Naive thymus-derived CD4-positive, alpha-beta T cell (primary cell): ENCODE measurements at regions of chr1 and their contacts with region 1.

Region 1: DNA sequence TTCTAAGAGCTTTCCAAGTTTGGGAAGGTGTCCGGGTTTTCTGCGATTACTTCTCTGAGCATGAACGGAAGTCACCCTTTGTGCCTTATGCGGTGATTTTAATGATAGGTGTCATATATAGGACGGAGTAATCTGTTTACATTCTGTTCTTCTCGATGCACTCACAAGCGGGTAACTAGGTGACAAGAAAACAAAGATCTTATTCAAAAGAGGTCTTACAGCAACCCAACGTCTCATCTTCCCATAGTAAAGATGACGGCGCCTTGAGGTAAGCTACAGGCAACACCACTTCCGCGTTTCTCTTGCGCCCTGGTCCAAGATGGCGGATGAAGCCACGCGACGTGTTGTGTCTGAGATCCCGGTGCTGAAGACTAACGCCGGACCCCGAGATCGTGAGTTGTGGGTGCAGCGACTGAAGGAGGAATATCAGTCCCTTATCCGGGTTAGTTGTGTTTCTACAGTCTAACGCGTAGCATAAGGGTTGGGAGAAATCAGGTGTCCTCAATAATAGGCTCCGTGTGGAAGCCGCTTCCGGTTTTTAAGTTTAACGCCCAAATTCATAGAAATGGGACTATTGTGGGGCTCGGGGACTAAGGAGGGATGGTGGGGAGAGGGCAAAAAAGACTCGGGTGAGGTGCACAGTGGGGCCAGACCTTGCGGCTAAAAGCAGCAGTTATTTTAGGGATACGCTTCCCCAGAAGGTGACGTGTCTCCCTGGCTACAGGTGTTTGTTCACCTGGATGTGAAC is at the start of gene UFC1:
- DNase-seq: peak; percentile 72 to 92 (median 87)
- ATAC-seq: peak; percentile 94
- H3K4me3 ChIP-seq: peak within 1 kb of the TSS; percentile 86
- H3K4me3 Mint-ChIP-seq: peak within 1 kb of the TSS; percentile 93 to 100 (median 100)
- H3K27ac ChIP-seq: peak within 1 kb of the TSS; percentile 88
- H3K27ac Mint-ChIP-seq: peak within 1 kb of the TSS; percentile 100
- H3K4me1 ChIP-seq: peaks cover 13 to 20% of the 10 kb centered on the region in 2 donors
- H3K4me1 Mint-ChIP-seq: peaks cover 7 to 39% (median 35%) of the 10 kb centered on the region in 7 donors
- H3K27me3 ChIP-seq: no peaks in the 10 kb centered on the region
- H3K27me3 Mint-ChIP-seq: no peaks in the 10 kb centered on the region
- total RNA-seq, gene UFC1: 83.7 to 116 (median 98.9) TPM

Region 2: GRCh38 chr1:161013488-161014230 is 140.2 kb before region 1 on chr1:
- CTCF ChIA-PET with region 1: no interaction called
- POLR2A ChIA-PET with region 1: no interaction called
- intact Hi-C with region 1: no loop called
- DNase-seq: peak; percentile 23 to 63 (median 57)
- ATAC-seq: peak; percentile 88
- H3K4me3 ChIP-seq: peak overlapping the region; percentile 57
- H3K4me3 Mint-ChIP-seq: peak overlapping the region; percentile 74 to 97 (median 84)
- H3K27ac ChIP-seq: peak overlapping the region; percentile 73
- H3K27ac Mint-ChIP-seq: peak overlapping the region; percentile 91 to 98 (median 96)
- H3K4me1 ChIP-seq: peaks cover 10 to 29% of the 10 kb centered on the region in 2 donors
- H3K4me1 Mint-ChIP-seq: peaks cover 23 to 49% (median 40%) of the 10 kb centered on the region in 7 donors
- H3K27me3 ChIP-seq: no peaks in the 10 kb centered on the region
- H3K27me3 Mint-ChIP-seq: no peaks in the 10 kb centered on the region

Region 3: DNA sequence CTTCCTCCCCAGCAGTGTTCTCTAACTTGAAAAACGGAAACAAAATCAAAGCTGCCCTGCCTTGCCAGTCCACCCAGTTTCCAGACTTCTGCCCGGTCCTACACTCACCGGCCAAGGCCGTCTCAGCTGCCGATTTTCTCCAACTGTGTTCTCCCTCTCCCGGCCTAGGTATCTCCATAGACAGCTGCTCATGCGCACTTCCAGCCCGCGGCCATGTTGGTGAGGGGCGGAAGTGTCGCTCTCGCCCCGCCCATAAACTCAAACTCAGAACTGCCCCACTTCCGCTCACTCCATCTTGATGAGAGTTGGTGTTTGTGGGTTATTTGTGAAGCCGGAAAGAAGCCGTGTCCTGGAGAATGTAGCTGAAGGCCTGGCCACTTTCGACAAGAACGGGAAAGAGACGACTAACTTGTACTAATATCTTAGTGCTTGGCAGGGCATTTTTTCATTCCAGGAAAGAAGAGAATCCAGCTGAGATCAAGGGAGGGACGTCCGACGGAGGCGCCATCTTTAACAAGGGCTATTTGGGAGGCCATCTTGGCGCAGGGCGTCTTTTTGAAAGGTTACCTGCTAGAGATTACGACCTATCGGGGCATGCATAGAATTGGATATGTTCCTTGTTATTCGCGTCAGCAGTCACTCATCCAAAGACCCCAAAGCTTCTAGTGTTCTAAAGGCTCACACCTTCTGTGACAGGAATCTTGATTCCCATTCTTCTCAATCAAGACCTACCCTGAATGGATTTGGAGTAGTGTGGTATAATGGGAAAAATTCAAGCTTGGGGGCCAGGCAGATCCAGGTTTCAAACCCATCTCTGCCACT is 107.9 kb before region 1 on chr1 and contains the start of gene USF1:
- CTCF ChIA-PET with region 1: interaction called, 5 read pairs
- POLR2A ChIA-PET with region 1: interaction called, 9 read pairs
- intact Hi-C with region 1: loop called (anchors 1 to 2 kb)
- DNase-seq: peak; percentile 84 to 96 (median 93)
- ATAC-seq: peak; percentile 89
- H3K4me3 ChIP-seq: peak within 1 kb of the TSS; percentile 93
- H3K4me3 Mint-ChIP-seq: peak within 1 kb of the TSS; percentile 93 to 100 (median 97)
- H3K27ac ChIP-seq: peak within 1 kb of the TSS; percentile 92
- H3K27ac Mint-ChIP-seq: peak within 1 kb of the TSS; percentile 92 to 100 (median 99)
- H3K4me1 ChIP-seq: peaks cover 17 to 23% of the 10 kb centered on the region in 2 donors
- H3K4me1 Mint-ChIP-seq: peaks cover 41 to 54% (median 49%) of the 10 kb centered on the region in 7 donors
- H3K27me3 ChIP-seq: no peaks in the 10 kb centered on the region
- H3K27me3 Mint-ChIP-seq: no peaks in the 10 kb centered on the region
- total RNA-seq, gene USF1: 71.6 to 115 (median 91.7) TPM

Region 4: GRCh38 chr1:161098210-161099068 is 55.4 kb before region 1 on chr1 and contains the start of gene KLHDC9:
- CTCF ChIA-PET with region 1: no interaction called
- POLR2A ChIA-PET with region 1: interaction called, 10 read pairs
- intact Hi-C with region 1: no loop called
- DNase-seq: peak; percentile 29 to 68 (median 42)
- ATAC-seq: peak; percentile 57
- H3K4me3 ChIP-seq: peak within 1 kb of the TSS; percentile 81
- H3K4me3 Mint-ChIP-seq: peak within 1 kb of the TSS; percentile 81 to 94 (median 90)
- H3K27ac ChIP-seq: peak within 1 kb of the TSS; percentile 47
- H3K27ac Mint-ChIP-seq: peak within 1 kb of the TSS; percentile 87 to 100 (median 96)
- H3K4me1 ChIP-seq: peaks cover 9 to 11% of the 10 kb centered on the region in 2 donors
- H3K4me1 Mint-ChIP-seq: peaks cover 18 to 40% (median 23%) of the 10 kb centered on the region in 7 donors
- H3K27me3 ChIP-seq: no peaks in the 10 kb centered on the region
- H3K27me3 Mint-ChIP-seq: peaks cover 0 to 12% (median 0%) of the 10 kb centered on the region in 5 donors
- total RNA-seq, gene KLHDC9: 0.40 to 1.1 TPM in 2 of 5 experiments, not detected in the others

Region 5: DNA sequence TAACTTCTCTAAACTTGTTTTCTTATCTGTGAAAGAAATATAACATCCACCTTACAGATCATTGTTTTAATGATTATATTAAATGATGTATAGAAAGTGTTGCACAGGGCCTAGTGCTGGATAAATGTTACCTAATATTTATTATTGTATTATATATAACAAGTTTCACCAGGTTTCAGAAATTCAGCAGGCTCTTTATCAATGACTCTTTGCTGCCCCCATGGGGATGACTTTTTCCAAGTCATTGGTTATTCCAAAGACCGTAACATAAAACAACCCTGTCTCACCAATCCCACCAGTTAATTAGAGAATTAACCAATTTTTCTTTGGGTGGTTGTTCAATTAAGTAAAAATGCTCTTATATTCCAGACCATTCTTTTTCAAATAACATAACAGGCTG is 14.1 kb before region 1 on chr1:
- CTCF ChIA-PET with region 1: interaction called, 4 read pairs
- POLR2A ChIA-PET with region 1: interaction called, 18 read pairs
- intact Hi-C with region 1: no loop called
- DNase-seq: peak in 5 of 9 donors; percentile 40 to 58 (median 50)
- ATAC-seq: peak; percentile 73
- H3K4me3 ChIP-seq: no peak overlapping the region
- H3K4me3 Mint-ChIP-seq: no peak overlapping the region
- H3K27ac ChIP-seq: no peak overlapping the region
- H3K27ac Mint-ChIP-seq: peak overlapping the region in 1 of 9 donors; percentile 54
- H3K4me1 ChIP-seq: no peaks in the 10 kb centered on the region
- H3K4me1 Mint-ChIP-seq: peaks cover 4 to 17% (median 10%) of the 10 kb centered on the region in 7 donors
- H3K27me3 ChIP-seq: no peaks in the 10 kb centered on the region
- H3K27me3 Mint-ChIP-seq: no peaks in the 10 kb centered on the region

Region 6: GRCh38 chr1:161185282-161185682 is 31.4 kb after region 1 on chr1:
- CTCF ChIA-PET with region 1: interaction called, 3 read pairs
- POLR2A ChIA-PET with region 1: interaction called, 13 read pairs
- intact Hi-C with region 1: loop called in 1 of 2 experiments (anchors 1 kb)
- DNase-seq: peak; percentile 38 to 92 (median 87)
- ATAC-seq: peak; percentile 88
- H3K4me3 ChIP-seq: peak overlapping the region; percentile 24
- H3K4me3 Mint-ChIP-seq: peak overlapping the region; percentile 76 to 89 (median 84)
- H3K27ac ChIP-seq: peak overlapping the region; percentile 65
- H3K27ac Mint-ChIP-seq: peak overlapping the region; percentile 92 to 99 (median 97)
- H3K4me1 ChIP-seq: peaks cover 74 to 79% of the 10 kb centered on the region in 2 donors
- H3K4me1 Mint-ChIP-seq: peaks cover 65 to 90% (median 80%) of the 10 kb centered on the region in 7 donors
- H3K27me3 ChIP-seq: no peaks in the 10 kb centered on the region
- H3K27me3 Mint-ChIP-seq: no peaks in the 10 kb centered on the region

Region 7: DNA sequence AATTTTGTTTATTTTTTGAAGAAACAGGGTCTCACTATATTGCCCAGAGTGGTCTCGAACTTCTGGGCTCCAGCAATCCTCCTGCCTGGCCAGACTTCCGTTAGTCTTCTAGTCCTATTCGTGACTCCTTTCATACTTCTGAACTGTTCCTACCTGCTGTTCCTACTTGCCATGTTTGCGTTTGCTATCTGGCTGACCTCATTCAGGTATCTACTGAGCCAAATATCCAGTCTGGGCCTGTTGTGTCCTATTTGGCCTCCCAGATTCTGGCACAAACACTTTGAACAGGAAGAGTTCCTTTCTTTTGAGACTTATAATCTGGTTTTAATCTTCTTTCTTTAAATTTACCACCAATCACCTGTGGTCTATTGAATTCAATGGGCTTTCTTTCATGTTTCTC is 91.0 kb after region 1 on chr1:
- CTCF ChIA-PET with region 1: no interaction called
- POLR2A ChIA-PET with region 1: no interaction called
- intact Hi-C with region 1: no loop called
- DNase-seq: no peak
- ATAC-seq: no peak
- H3K4me3 ChIP-seq: no peak overlapping the region
- H3K4me3 Mint-ChIP-seq: no peak overlapping the region
- H3K27ac ChIP-seq: no peak overlapping the region
- H3K27ac Mint-ChIP-seq: no peak overlapping the region
- H3K4me1 ChIP-seq: no peaks in the 10 kb centered on the region
- H3K4me1 Mint-ChIP-seq: peaks cover 0 to 1% (median 0%) of the 10 kb centered on the region in 7 donors
- H3K27me3 ChIP-seq: no peaks in the 10 kb centered on the region
- H3K27me3 Mint-ChIP-seq: peaks cover 0 to 14% (median 8%) of the 10 kb centered on the region in 5 donors